Caco-2 (cell line): ENCODE measurements at regions of chr12 and their contacts with region 1.

Region 1: GRCh38 chr12:23757541-23757962 is 191.9 kb downstream of the SOX5 start:
- DNase-seq: peak; percentile 61 to 79
- H3K4me3 ChIP-seq: no peak overlapping the region
- H3K4me3 Mint-ChIP-seq: peak overlapping the region; percentile 39
- H3K27ac Mint-ChIP-seq: peak overlapping the region; percentile 92
- H3K4me1 ChIP-seq: peaks cover 27% of the 10 kb centered on the region
- H3K4me1 Mint-ChIP-seq: peaks cover 44% of the 10 kb centered on the region
- H3K27me3 ChIP-seq: no peaks in the 10 kb centered on the region
- H3K27me3 Mint-ChIP-seq: no peaks in the 10 kb centered on the region
- CTCF ChIP-seq: no peak

Region 2: GRCh38 chr12:23722655-23723054 is 34.9 kb before region 1 on chr12:
- CTCF ChIA-PET with region 1: no interaction called
- POLR2A ChIA-PET with region 1: no interaction called
- intact Hi-C with region 1: loop called (anchors 5 kb)
- DNase-seq: peak in 1 of 2 experiments; percentile 19
- H3K4me3 ChIP-seq: no peak overlapping the region
- H3K4me3 Mint-ChIP-seq: peak overlapping the region; percentile 10
- H3K27ac Mint-ChIP-seq: no peak overlapping the region
- H3K4me1 ChIP-seq: peaks cover 6% of the 10 kb centered on the region; the same call in 1 of the 2 replicates
- H3K4me1 Mint-ChIP-seq: peaks cover 14% of the 10 kb centered on the region
- H3K27me3 ChIP-seq: no peaks in the 10 kb centered on the region
- H3K27me3 Mint-ChIP-seq: no peaks in the 10 kb centered on the region
- CTCF ChIP-seq: no peak

Region 3: DNA sequence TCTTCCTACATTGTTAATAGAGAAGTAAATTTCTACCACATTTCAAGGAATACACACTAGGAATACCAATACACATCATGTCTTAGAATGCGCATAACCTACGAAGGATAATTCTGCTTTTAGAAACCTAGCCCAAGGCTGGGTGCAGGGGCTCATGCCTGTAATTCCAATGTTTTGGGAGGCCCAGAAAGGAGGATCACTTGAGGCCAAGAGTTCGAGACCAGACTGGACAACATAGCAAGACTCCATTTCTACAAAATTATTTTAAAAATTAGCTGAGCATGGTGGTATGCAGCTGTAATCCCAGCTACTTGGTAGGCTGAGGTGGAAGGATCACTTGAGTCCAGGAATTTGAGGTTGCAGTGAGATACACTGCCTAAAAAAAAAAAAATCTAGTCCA is 15.0 kb before region 1 on chr12:
- CTCF ChIA-PET with region 1: interaction called, 4 read pairs
- POLR2A ChIA-PET with region 1: no interaction called
- intact Hi-C with region 1: loop called (anchors 1 kb)
- DNase-seq: no peak
- H3K4me3 ChIP-seq: no peak overlapping the region
- H3K4me3 Mint-ChIP-seq: no peak overlapping the region
- H3K27ac Mint-ChIP-seq: no peak overlapping the region
- H3K4me1 ChIP-seq: peaks cover 19% of the 10 kb centered on the region
- H3K4me1 Mint-ChIP-seq: peaks cover 28% of the 10 kb centered on the region
- H3K27me3 ChIP-seq: no peaks in the 10 kb centered on the region
- H3K27me3 Mint-ChIP-seq: no peaks in the 10 kb centered on the region
- CTCF ChIP-seq: no peak

Region 4: GRCh38 chr12:23827353-23827752 is 69.8 kb after region 1 on chr12:
- CTCF ChIA-PET with region 1: no interaction called
- POLR2A ChIA-PET with region 1: no interaction called
- intact Hi-C with region 1: loop called (anchors 1 kb)
- DNase-seq: peak in 1 of 2 experiments; percentile 37
- H3K4me3 ChIP-seq: no peak overlapping the region
- H3K4me3 Mint-ChIP-seq: peak overlapping the region; percentile 24
- H3K27ac Mint-ChIP-seq: no peak overlapping the region
- H3K4me1 ChIP-seq: no peaks in the 10 kb centered on the region
- H3K4me1 Mint-ChIP-seq: peaks cover 13% of the 10 kb centered on the region
- H3K27me3 ChIP-seq: no peaks in the 10 kb centered on the region
- H3K27me3 Mint-ChIP-seq: no peaks in the 10 kb centered on the region
- CTCF ChIP-seq: no peak

Region 5: DNA sequence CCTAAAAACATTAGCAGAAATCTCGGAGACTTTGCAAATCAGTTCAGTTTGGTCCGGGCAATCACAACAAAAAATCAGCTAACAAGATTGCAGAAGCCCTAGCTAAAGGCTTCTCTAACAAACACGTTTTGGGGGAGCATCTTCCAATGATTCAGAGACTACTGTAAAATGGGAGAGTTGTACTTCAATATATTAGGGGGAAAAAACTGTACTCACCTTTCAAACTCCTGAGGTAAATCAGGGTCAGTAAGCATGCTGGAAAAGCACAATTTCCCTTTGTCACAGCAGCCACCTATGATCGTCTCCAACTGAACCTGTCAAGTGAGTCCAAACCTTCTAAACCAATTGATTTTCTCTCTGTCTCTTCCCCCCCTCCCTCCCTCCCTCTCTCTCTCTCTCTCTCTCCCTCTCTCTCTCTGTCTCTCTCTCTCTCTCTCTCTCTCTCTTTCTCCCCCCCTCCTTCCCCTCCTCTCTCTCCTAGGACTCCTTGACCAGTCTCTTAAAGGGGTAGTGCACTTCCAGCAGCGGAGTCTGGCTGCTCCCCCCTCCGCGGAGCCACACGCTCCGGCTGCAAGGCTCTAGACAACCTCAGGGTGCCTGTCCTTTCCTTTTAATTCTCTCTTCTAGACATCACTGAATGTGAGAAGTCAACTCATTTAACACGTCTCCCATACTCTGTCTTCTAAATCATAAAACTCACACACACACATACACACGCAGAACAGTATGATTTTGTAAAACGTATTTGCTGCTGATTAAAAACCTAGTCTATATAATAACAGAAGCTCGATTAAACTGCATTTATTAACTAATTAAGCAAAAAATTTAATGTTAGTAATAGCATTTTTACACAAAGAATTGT is 192.0 kb after region 1 on chr12 and contains the start of gene SOX5:
- CTCF ChIA-PET with region 1: no interaction called
- POLR2A ChIA-PET with region 1: no interaction called
- intact Hi-C with region 1: loop called (anchors 2 kb)
- DNase-seq: peak; percentile 60 to 61
- H3K4me3 ChIP-seq: peak within 1 kb of the TSS; percentile 48
- H3K4me3 Mint-ChIP-seq: no peak within 1 kb of the TSS
- H3K27ac Mint-ChIP-seq: no peak within 1 kb of the TSS
- H3K4me1 ChIP-seq: no peaks in the 10 kb centered on the region
- H3K4me1 Mint-ChIP-seq: no peaks in the 10 kb centered on the region
- H3K27me3 ChIP-seq: no peaks in the 10 kb centered on the region
- H3K27me3 Mint-ChIP-seq: no peaks in the 10 kb centered on the region
- CTCF ChIP-seq: no peak
- total RNA-seq, gene SOX5: 15.4 and 16.8 TPM in 2 replicates